Gastrocnemius medialis (tissue), 4 donors: ENCODE measurements at regions of chr18 and their contacts with region 1.

Region 1: GRCh38 chr18:45664824-45665763 is 49.8 kb downstream of the SLC14A2 start:
- DNase-seq: peak; percentile 24 to 44
- ATAC-seq: peak; percentile 51 to 54
- H3K4me3 ChIP-seq: no peak overlapping the region
- H3K27ac ChIP-seq: no peak overlapping the region
- H3K4me1 ChIP-seq: peaks cover 10 to 13% of the 10 kb centered on the region in 2 donors
- H3K27me3 ChIP-seq: no peaks in the 10 kb centered on the region
- CTCF ChIP-seq: peak; percentile 79 to 95 (median 82)
- POLR2A ChIP-seq: no peak

Region 2: DNA sequence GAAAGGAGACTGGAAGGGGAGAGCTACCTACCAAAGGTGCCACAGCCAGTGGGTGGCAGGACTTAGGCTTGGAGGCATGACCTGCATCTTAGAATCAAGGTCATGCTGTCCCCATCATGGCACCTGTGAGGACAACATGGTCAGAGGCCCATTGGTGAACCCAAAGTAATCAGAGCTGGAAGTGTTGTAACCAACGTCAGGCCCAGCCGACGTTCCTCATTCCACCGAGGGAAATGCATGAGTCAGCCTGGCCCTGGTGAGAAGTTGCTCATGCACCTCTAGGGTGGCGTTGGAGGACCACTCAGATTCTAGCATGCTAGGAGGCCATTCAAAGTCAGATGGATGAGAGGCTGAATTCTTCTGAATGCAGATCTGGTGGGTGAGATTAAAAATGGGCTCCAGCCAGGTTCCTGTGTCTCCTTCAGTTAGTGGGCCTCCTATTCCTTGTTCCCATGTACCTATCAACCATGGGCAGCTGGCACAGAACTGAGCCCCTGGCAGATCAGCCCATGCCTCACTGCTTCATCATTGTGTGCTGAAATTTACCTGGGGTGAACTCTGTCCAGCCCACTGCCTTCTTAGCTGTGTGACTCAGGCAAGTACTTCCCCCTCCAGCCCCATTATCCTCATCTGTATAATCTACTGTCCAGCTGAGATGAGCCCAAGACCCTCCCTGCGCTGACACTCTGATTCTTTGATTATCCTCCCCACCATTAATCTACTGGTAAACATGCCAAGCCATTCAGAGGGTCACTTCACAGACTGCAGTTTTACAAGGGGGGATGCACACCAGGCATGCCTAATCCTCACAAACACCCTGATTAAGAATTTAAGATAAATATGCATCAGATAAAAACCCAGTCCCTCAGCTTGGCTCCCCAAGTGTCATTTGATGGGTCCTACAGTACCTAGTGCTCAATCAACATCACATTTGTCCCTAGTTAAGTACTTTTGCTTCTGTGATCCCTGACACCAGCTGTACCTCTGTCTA is 35.8 kb before region 1 on chr18:
- in situ Hi-C with region 1: no loop called
- intact Hi-C with region 1: no loop called
- DNase-seq: no peak
- ATAC-seq: no peak
- H3K4me3 ChIP-seq: no peak overlapping the region
- H3K27ac ChIP-seq: no peak overlapping the region
- H3K4me1 ChIP-seq: no peaks in the 10 kb centered on the region
- H3K27me3 ChIP-seq: no peaks in the 10 kb centered on the region
- CTCF ChIP-seq: no peak
- POLR2A ChIP-seq: no peak

Region 3: GRCh38 chr18:45879681-45880655 is 214.9 kb after region 1 on chr18:
- in situ Hi-C with region 1: loop called in 1 of 4 experiments (anchors 25 kb)
- intact Hi-C with region 1: loop called (anchors 1 kb)
- DNase-seq: peak; percentile 4 to 28
- ATAC-seq: peak; percentile 63 to 75
- H3K4me3 ChIP-seq: no peak overlapping the region
- H3K27ac ChIP-seq: no peak overlapping the region
- H3K4me1 ChIP-seq: no peaks in the 10 kb centered on the region
- H3K27me3 ChIP-seq: no peaks in the 10 kb centered on the region
- CTCF ChIP-seq: peak; percentile 85 to 98 (median 85)
- POLR2A ChIP-seq: no peak

Region 4: DNA sequence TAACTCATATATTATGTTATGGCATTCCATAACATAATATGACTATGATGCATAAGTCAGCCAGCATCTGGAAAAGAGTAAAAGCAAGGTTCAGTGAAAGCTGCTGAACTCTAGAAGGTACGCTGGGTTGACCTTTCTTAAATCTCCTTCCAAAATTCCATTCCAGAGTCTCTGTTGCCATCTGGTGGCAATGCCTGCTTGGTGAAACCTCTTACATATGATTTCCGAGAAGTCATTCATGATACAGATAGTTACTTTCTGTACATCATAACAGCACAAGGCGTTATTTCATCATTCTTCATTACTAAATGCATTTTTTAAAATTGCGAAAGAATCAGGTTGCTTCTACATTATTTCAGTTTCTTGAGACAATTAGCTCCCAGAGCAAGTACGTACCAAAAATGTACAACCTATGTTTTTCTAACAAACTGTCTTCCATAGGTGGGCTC is 309.0 kb after region 1 on chr18:
- in situ Hi-C with region 1: loop called in 2 of 4 experiments (anchors 10 to 25 kb)
- intact Hi-C with region 1: loop called (anchors 1 kb)
- DNase-seq: peak; percentile 26 to 54
- ATAC-seq: peak; percentile 83 to 94
- H3K4me3 ChIP-seq: peak overlapping the region in 1 of 4 donors; percentile 23
- H3K27ac ChIP-seq: no peak overlapping the region
- H3K4me1 ChIP-seq: peaks cover 0 to 3% of the 10 kb centered on the region in 2 donors
- H3K27me3 ChIP-seq: no peaks in the 10 kb centered on the region
- CTCF ChIP-seq: peak; percentile 47 to 78 (median 71)
- POLR2A ChIP-seq: no peak

Region 5: DNA sequence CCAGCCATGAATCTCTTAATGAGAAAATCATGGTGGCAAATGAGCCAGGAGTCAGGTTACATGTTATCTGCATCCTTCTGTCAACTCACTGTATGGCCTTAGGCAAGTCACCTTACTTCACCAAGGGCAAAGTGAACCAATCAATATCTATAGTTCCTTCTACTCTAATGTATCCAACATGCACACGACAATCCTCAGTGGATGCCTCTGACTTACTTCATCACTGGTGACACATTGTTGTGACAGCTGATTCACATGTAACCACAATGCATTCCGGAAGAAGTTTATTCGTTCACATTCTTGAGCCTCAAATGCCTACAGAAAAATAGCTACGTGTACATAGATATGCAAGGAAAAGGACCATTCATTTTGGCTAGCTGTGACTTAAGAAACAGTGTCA is 328.3 kb after region 1 on chr18:
- in situ Hi-C with region 1: loop called in 1 of 4 experiments (anchors 25 kb)
- intact Hi-C with region 1: no loop called
- DNase-seq: no peak
- ATAC-seq: no peak
- H3K4me3 ChIP-seq: no peak overlapping the region
- H3K27ac ChIP-seq: no peak overlapping the region
- H3K4me1 ChIP-seq: no peaks in the 10 kb centered on the region
- H3K27me3 ChIP-seq: no peaks in the 10 kb centered on the region
- CTCF ChIP-seq: no peak
- POLR2A ChIP-seq: no peak